AG04449 (cell line): ENCODE measurements at regions of chr9 and their contacts with region 1.

Region 1: DNA sequence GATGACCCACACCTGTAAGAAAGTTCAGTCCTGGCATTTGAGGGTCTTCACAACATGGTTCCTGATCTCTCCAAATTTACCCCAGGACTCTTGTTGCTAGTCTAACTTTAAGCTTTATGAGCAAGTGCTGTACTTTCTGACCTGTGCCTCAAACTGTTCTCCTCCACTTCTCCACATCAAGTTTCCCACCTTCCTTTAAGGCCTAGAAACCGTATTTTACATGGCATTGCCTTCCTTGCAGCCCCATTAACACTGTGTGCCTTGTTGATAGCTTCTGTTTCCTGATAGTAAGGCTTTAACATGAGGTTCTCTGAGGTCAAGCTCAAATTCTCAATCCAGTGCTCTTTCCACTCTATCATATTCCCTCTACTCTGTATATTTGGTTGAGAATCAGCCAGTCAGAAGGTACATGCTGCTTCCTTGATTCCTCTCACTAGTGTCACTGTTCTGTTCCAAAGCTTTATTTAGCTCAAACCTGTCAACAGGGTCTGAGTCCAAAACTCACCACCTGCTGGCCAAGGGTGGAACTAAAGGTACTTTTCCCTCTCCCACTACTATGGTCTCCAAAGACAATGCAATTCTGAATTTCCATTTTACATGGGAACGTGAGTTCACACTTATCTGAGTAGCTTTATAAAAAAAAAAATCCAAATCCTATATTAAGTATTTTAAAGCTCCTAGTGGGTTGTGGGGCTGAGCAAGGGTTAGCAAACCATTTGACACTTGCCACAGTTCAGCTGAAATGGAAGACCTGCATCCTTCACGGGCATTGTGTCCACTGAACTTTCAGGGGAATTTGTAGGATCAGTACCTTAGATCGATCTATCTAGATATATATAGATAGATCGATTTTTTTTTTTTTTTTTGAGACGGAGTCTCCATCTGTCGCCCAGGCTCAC is 21.1 kb downstream of the VCP start:
- DNase-seq: no peak
- H3K4me3 ChIP-seq: no peak overlapping the region
- CTCF ChIP-seq: peak; percentile 65

Region 2: GRCh38 chr9:34994260-34994899 is 56.9 kb before region 1 on chr9:
- CTCF ChIA-PET with region 1: interaction called, 12 read pairs
- POLR2A ChIA-PET with region 1: no interaction called
- DNase-seq: no peak
- H3K4me3 ChIP-seq: no peak overlapping the region
- CTCF ChIP-seq: peak; percentile 78

Region 3: DNA sequence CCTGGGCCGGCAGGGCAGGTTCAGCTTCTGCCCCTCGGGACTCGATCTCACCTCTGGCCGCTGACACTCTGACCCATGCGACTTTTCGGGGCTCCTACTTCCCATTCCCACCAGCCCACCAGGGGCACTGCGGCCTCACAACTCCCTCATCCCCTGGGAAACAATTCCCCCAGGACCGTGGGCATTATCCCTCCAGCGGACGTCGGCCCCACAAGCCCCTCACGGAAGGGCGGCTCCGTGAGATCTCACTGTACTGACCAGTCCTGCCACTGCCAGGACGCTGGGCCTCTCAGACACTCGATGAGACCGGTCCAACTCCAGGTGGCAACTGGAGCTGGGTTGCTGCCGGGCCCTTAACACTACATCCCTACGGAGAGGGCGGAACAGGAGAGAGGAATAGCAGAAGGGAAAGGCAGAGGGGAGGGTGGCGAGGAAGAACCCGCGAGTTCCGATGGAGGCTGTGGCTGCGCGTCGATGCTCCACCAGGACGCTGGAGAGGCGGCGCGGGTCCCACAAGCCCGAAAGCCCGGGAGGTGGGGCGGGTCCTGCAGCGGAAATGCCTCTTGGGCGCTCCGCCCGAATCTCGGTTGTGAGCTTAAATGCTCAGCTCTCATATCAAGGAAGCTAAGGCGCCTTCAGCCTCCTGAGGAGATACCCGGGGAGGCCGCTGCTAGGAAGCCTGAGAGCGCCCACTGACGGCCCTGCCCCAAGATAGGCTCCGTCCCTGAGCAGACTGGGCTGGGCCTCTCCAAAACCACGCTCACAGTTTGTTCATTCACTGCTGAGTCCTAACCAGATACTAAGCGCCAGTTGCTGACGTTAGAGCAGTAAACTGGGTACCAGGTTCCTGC is 15.2 kb before region 1 on chr9:
- CTCF ChIA-PET with region 1: interaction called, 27 read pairs
- POLR2A ChIA-PET with region 1: no interaction called
- DNase-seq: no peak
- H3K4me3 ChIP-seq: peak overlapping the region; percentile 42
- CTCF ChIP-seq: no peak

Region 4: GRCh38 chr9:35071814-35072460 is 20.6 kb after region 1 on chr9:
- CTCF ChIA-PET with region 1: interaction called, 15 read pairs
- POLR2A ChIA-PET with region 1: interaction called, 6 read pairs
- DNase-seq: no peak
- H3K4me3 ChIP-seq: peak overlapping the region; percentile 94
- CTCF ChIP-seq: peak; percentile 40